Mammary epithelial cell (primary cell): ENCODE measurements at regions of chr7 and their contacts with region 1.

Region 1: DNA sequence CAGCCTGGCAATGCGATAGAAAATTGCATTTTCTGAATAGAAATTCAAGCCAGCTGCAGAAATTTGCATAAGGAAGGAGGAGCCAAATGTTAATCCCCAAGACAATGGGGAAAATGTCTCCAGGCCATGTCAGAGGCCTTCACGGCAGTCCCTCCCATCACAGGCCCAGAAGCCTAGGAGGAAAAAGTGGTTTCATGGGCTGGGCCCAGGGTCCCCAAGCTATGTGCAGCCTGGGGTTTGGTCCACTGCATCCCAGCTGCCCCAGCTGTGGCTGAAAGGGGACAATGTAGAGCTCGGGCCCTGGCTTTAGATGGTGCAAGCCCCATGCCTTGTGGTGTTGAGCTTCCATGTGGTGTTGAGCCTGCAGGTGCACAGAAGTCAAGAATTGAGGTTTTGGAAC is 10.0 kb upstream of the GARIN1A start:
- DNase-seq: no peak
- H3K4me3 ChIP-seq: no peak overlapping the region
- H3K27ac ChIP-seq: no peak overlapping the region
- H3K4me1 ChIP-seq: no peaks in the 10 kb centered on the region
- H3K27me3 ChIP-seq: no peaks in the 10 kb centered on the region
- CTCF ChIP-seq: no peak

Region 2: GRCh38 chr7:128714701-128715495 is 52.8 kb after region 1 on chr7:
- CTCF ChIA-PET with region 1: no interaction called
- dilution Hi-C with region 1: loop called (anchors 5 kb)
- in situ Hi-C with region 1: no loop called
- intact Hi-C with region 1: no loop called
- DNase-seq: no peak
- H3K4me3 ChIP-seq: no peak overlapping the region
- H3K27ac ChIP-seq: no peak overlapping the region
- H3K4me1 ChIP-seq: peaks cover 12% of the 10 kb centered on the region
- H3K27me3 ChIP-seq: no peaks in the 10 kb centered on the region
- CTCF ChIP-seq: no peak

Region 3: GRCh38 chr7:128986609-128987008 is 324.5 kb after region 1 on chr7:
- CTCF ChIA-PET with region 1: no interaction called
- dilution Hi-C with region 1: no loop called
- in situ Hi-C with region 1: no loop called
- intact Hi-C with region 1: no loop called
- DNase-seq: no peak
- H3K4me3 ChIP-seq: no peak overlapping the region
- H3K27ac ChIP-seq: no peak overlapping the region
- H3K4me1 ChIP-seq: no peaks in the 10 kb centered on the region
- H3K27me3 ChIP-seq: no peaks in the 10 kb centered on the region
- CTCF ChIP-seq: no peak